ENCODE measurements at regions of chr5 and their contacts with region 1.

Region 1: DNA sequence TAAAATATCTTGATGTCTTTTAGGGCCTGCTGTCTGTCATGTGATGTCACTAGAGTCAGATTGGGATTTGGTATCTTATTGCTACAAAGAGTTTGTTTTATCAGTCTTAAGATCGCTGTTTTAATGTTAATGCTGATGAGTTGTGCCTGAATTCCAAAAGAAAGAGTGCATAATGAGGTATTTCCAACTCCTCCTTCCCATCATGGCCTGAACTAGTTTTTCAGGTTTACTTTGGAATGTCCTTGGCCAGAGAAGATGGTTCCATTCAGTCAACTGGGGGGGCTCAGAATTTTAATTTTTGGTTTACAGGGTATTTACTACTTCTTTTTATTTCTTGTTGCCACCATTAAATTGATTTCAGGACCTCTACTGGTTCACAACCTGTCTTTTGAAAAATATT is 74.3 kb upstream of the MARCHF11 start:
- DNase-seq: no peak
- H3K4me3 Mint-ChIP-seq: no peak overlapping the region
- H3K27ac Mint-ChIP-seq: no peak overlapping the region
- H3K4me1 Mint-ChIP-seq: no peaks in the 10 kb centered on the region
- H3K27me3 Mint-ChIP-seq: peaks cover 4% of the 10 kb centered on the region

Region 2: GRCh38 chr5:16234598-16234997 is 19.3 kb before region 1 on chr5:
- CTCF ChIA-PET with region 1: no interaction called
- intact Hi-C with region 1: loop called (anchors 1 kb)
- DNase-seq: no peak
- H3K4me3 Mint-ChIP-seq: no peak overlapping the region
- H3K27ac Mint-ChIP-seq: no peak overlapping the region
- H3K4me1 Mint-ChIP-seq: no peaks in the 10 kb centered on the region
- H3K27me3 Mint-ChIP-seq: no peaks in the 10 kb centered on the region

Measured in activated naive CD4-positive, alpha-beta T cell treated with anti-CD3 and anti-CD28 coated beads for 36 hours (primary cell).